ENCODE measurements at regions of chr5 and their contacts with region 1.

Region 1: GRCh38 chr5:168219515-168220410 is 71.7 kb upstream of the WWC1 start:
- DNase-seq: peak in 1 of 3 donors; percentile 52
- ATAC-seq: peak; percentile 91 to 97 (median 96)
- H3K4me3 ChIP-seq: no peak overlapping the region
- H3K27ac ChIP-seq: no peak overlapping the region
- H3K4me1 ChIP-seq: no peaks in the 10 kb centered on the region
- H3K27me3 ChIP-seq: no peaks in the 10 kb centered on the region
- CTCF ChIP-seq: peak; percentile 83 to 93 (median 86)
- POLR2A ChIP-seq: no peak

Region 2: GRCh38 chr5:167819406-167819805 is 400.4 kb before region 1 on chr5:
- intact Hi-C with region 1: no loop called
- DNase-seq: no peak
- ATAC-seq: no peak
- H3K4me3 ChIP-seq: no peak overlapping the region
- H3K27ac ChIP-seq: no peak overlapping the region
- H3K4me1 ChIP-seq: no peaks in the 10 kb centered on the region
- H3K27me3 ChIP-seq: no peaks in the 10 kb centered on the region
- CTCF ChIP-seq: no peak
- POLR2A ChIP-seq: no peak

Region 3: GRCh38 chr5:168114444-168115017 is 105.2 kb before region 1 on chr5:
- intact Hi-C with region 1: loop called in 1 of 2 experiments (anchors 10 kb)
- DNase-seq: peak; percentile 60 to 72 (median 66)
- ATAC-seq: peak; percentile 96 to 99 (median 98)
- H3K4me3 ChIP-seq: no peak overlapping the region
- H3K27ac ChIP-seq: no peak overlapping the region
- H3K4me1 ChIP-seq: no peaks in the 10 kb centered on the region
- H3K27me3 ChIP-seq: no peaks in the 10 kb centered on the region
- CTCF ChIP-seq: peak; percentile 71 to 81 (median 78)
- POLR2A ChIP-seq: no peak

Region 4: DNA sequence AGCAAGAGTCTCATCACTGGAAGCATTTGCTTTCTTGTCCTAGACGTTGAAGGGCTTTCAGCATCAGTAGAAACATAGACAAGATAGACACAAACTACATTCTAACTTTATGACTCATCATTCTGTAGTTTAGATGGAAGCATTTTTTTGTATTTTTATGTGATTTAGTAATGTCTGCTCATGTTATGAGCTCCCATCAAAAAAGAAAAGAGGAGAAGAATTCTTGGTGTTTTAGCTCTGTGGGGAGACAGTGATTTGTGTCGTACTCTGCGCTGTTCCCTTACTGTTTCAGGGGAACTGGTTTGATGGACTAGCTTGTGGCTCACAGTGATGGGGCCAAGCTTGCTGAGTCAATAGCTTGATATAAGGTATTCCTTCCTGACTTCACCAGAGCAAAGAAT is 87.5 kb before region 1 on chr5:
- intact Hi-C with region 1: loop called in 1 of 2 experiments (anchors 5 kb)
- DNase-seq: no peak
- ATAC-seq: no peak
- H3K4me3 ChIP-seq: no peak overlapping the region
- H3K27ac ChIP-seq: no peak overlapping the region
- H3K4me1 ChIP-seq: peaks cover 0 to 11% (median 6%) of the 10 kb centered on the region in 4 donors
- H3K27me3 ChIP-seq: no peaks in the 10 kb centered on the region
- CTCF ChIP-seq: no peak
- POLR2A ChIP-seq: no peak